ENCODE measurements at regions of chr6 and their contacts with region 1.

Region 1: GRCh38 chr6:53309059-53309900 is 39.5 kb downstream of the ELOVL5 start:
- DNase-seq: no peak
- H3K4me3 Mint-ChIP-seq: no peak overlapping the region
- H3K27ac Mint-ChIP-seq: no peak overlapping the region
- H3K4me1 Mint-ChIP-seq: peaks cover 80% of the 10 kb centered on the region
- H3K27me3 Mint-ChIP-seq: no peaks in the 10 kb centered on the region

Region 2: GRCh38 chr6:52399511-52400312 is 909.6 kb before region 1 on chr6:
- CTCF ChIA-PET with region 1: no interaction called
- intact Hi-C with region 1: loop called (anchors 10 kb)
- DNase-seq: peak; percentile 64
- H3K4me3 Mint-ChIP-seq: no peak overlapping the region
- H3K27ac Mint-ChIP-seq: peak overlapping the region; percentile 73
- H3K4me1 Mint-ChIP-seq: peaks cover 72% of the 10 kb centered on the region
- H3K27me3 Mint-ChIP-seq: no peaks in the 10 kb centered on the region

Region 3: GRCh38 chr6:52995913-52996645 is 313.2 kb before region 1 on chr6:
- CTCF ChIA-PET with region 1: no interaction called
- intact Hi-C with region 1: loop called (anchors 5 kb)
- DNase-seq: peak; percentile 54
- H3K4me3 Mint-ChIP-seq: peak overlapping the region; percentile 98
- H3K27ac Mint-ChIP-seq: peak overlapping the region; percentile 99
- H3K4me1 Mint-ChIP-seq: peaks cover 29% of the 10 kb centered on the region
- H3K27me3 Mint-ChIP-seq: peaks cover 13% of the 10 kb centered on the region

Region 4: DNA sequence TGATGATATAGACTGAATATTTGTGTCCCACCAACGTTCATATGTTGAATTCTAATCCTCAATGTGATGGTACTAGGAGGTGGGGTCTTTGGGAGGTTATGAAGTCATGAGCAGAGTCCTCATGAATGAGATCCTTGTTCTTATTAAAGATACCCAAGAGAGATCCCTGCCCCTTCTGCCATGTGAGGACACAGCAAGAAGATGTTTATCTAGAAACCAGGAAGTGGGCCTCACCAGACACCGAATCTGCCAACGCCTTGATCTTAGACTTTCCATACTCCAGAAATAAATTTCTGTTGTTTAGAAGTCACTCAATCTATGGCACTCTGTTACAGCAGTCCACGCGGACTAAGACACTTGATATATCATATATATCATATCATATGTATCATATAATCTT is 93.0 kb before region 1 on chr6:
- CTCF ChIA-PET with region 1: no interaction called
- intact Hi-C with region 1: no loop called
- DNase-seq: no peak
- H3K4me3 Mint-ChIP-seq: no peak overlapping the region
- H3K27ac Mint-ChIP-seq: no peak overlapping the region
- H3K4me1 Mint-ChIP-seq: peaks cover 12% of the 10 kb centered on the region
- H3K27me3 Mint-ChIP-seq: no peaks in the 10 kb centered on the region

Region 5: GRCh38 chr6:53244958-53245357 is 64.3 kb before region 1 on chr6:
- CTCF ChIA-PET with region 1: no interaction called
- intact Hi-C with region 1: loop called (anchors 2 kb)
- DNase-seq: peak; percentile 65
- H3K4me3 Mint-ChIP-seq: no peak overlapping the region
- H3K27ac Mint-ChIP-seq: no peak overlapping the region
- H3K4me1 Mint-ChIP-seq: peaks cover 37% of the 10 kb centered on the region
- H3K27me3 Mint-ChIP-seq: no peaks in the 10 kb centered on the region

Region 6: DNA sequence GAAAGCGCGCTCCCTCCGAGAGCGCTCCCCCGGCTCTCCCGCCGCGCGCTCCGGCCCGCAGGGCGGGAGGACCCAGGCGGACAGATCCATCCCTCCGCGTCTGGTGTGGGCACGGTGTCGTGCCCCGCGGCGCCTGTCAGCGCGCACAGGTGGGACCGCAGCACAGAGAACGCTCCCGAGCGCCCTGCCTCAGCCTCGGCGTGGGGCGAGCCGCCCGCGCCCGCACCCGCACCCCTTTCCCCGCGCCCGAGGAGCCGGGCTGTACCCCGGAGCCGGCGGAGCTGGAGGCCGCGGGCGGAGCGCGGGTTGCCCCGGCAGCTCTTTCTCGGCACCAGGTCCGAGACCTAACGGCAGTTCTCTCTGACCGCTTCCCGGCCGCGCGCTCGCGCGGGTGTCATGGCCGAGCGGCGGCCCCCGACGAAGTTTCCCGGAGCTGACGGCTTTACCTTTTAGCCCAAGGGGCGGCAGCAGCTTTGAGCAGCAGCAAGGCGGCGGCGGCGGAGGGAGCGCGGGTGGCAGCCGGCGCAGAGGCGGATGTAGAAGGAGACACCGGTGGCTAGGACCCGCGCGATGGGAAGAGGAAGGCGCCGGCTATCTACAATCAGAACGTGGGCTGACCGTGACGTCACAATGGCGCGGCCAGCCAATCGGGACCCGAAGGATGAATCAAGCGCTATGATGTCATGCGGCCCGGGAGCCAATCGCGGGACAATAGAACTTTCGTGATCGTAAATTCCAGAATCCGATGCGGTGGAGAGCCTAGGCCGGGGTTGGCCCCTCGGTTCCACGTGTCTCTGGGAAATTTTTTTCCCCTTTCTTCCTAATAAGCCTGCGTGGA is 39.3 kb after region 1 on chr6 and contains the start of gene ELOVL5:
- CTCF ChIA-PET with region 1: interaction called, 8 read pairs
- intact Hi-C with region 1: loop called (anchors 1 kb)
- DNase-seq: peak; percentile 99
- H3K4me3 Mint-ChIP-seq: peak within 1 kb of the TSS; percentile 80
- H3K27ac Mint-ChIP-seq: peak within 1 kb of the TSS; percentile 89
- H3K4me1 Mint-ChIP-seq: peaks cover 47% of the 10 kb centered on the region
- H3K27me3 Mint-ChIP-seq: no peaks in the 10 kb centered on the region
- total RNA-seq, gene ELOVL5: 132 to 136 TPM

Region 7: GRCh38 chr6:53544470-53545308 is 235.4 kb after region 1 on chr6 and contains the start of gene GCLC:
- CTCF ChIA-PET with region 1: no interaction called
- intact Hi-C with region 1: loop called (anchors 1 kb)
- DNase-seq: peak; percentile 88
- H3K4me3 Mint-ChIP-seq: peak within 1 kb of the TSS; percentile 94
- H3K27ac Mint-ChIP-seq: peak within 1 kb of the TSS; percentile 86
- H3K4me1 Mint-ChIP-seq: peaks cover 63% of the 10 kb centered on the region
- H3K27me3 Mint-ChIP-seq: no peaks in the 10 kb centered on the region
- total RNA-seq, gene GCLC: 13.9 to 18.1 TPM

Measured in activated naive CD4-positive, alpha-beta T cell treated with anti-CD3 and anti-CD28 coated beads for 36 hours (primary cell).